ENCODE measurements at regions of chr3 and their contacts with region 1.

Region 1: DNA sequence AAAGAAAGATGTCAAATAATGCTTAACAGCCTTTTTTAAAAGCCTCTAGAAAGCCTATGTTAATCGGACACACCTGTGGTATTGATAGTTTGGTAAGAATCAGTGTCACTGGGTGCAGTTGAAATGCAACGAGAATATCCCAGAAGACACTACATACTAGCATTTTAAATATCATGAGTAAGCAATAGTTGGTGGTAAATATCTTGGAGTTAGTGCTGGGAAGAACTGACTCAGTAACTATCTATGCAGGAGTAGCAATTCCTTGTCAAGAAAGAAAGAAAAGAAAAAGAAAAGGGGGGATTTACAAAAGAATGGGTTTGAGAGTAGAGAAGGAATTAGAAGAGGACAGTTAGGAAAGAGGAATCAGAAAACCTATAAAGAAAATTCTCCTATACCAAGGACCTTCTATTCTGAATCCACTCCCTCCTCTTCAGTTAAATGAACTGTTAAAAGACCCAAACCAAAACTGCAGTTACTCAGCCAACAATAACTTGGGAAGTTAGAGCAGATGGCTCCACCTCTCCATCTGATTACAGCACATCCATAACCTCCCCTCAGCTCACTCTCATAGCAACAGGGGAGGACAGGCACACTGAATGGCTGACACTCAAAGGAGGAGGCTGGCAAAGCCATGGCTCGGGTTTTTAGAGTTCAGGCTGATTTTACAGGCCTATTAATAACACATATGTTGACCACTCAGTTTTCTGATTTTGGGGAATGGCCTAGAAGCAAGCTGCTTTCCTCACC is 207.6 kb upstream of the MDFIC2 start:
- DNase-seq: no peak
- H3K4me3 ChIP-seq: no peak overlapping the region
- H3K27ac ChIP-seq: no peak overlapping the region
- H3K4me1 ChIP-seq: no peaks in the 10 kb centered on the region
- H3K27me3 ChIP-seq: no peaks in the 10 kb centered on the region
- CTCF ChIP-seq: no peak

Region 2: DNA sequence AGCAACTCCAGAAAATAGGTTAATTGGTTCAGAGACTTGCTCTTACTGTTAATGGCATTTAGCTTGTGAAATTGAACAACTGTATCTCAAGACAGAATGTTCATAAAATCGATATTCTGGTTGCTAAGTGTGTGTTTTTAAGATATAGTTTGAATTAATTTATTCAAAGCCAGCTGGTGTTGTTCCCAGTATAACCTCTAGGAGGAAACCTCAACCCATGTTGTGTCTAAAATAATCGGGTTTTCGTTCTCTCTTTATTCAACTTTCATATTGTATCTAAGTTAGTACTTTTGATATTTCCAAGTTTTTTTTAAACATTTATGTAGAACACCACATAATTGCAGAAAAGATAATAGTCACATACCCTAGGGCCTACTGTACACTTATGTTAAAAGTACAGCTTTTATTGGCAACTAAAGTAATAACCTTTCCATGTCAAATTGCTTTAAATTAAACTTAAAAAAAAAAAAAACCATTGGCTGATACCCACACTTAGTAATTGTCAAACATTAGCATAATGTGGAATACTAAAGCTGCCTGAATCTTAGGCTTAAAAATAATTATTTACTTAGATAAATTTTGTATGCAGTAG is 429.7 kb before region 1 on chr3:
- intact Hi-C with region 1: loop called (anchors 10 kb)
- DNase-seq: no peak
- H3K4me3 ChIP-seq: peak overlapping the region in 1 of 2 donors; percentile 24
- H3K27ac ChIP-seq: no peak overlapping the region
- H3K4me1 ChIP-seq: peaks cover 0 to 8% of the 10 kb centered on the region in 2 donors
- H3K27me3 ChIP-seq: no peaks in the 10 kb centered on the region
- CTCF ChIP-seq: peak; percentile 56 to 73 (median 68)